ENCODE measurements at regions of chr10 and their contacts with region 1.

Region 1: DNA sequence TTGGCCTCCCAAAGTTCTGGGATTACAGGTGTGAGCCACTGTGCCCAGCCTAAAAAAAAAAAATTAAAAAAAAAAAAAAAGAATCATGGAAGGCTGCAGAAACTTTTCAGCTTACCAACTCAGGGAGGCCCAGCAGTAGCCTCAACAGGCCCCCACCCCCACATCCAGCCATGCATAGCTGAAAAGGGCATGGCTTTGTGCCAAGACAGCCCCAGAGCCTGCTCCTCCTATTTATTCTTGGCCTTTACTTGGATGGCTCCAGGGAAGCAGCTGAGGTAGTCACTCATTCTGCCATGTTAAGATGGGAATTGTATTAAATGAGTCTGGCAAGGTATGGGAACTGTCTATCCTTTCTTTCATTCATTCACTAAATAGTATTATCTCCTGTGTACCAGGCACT is 13.7 kb upstream of the CNNM2 start:
- DNase-seq: no peak
- ATAC-seq: no peak

Region 2: DNA sequence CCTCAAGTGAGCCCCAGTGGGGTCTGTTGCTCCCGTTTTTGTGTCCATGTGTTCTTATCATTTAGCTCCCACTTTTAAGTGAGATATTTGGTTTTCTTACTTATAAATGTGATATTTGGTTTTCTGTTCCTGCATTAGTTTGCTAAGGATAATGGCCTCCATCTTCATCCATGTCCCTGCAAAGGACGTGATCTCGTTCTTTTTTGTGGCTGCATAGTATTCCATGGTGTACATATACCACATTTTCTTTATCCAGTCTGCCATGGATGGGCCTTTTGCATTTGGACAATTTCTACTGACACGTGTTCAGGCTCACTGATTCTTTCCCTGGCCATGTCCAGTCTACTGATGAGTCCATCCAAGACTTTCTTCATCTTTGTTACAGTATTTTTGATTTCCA is 180.4 kb before region 1 on chr10:
- intact Hi-C with region 1: loop called (anchors 2 kb)
- DNase-seq: no peak
- ATAC-seq: no peak

Region 3: GRCh38 chr10:102835007-102835482 is 69.3 kb before region 1 on chr10:
- intact Hi-C with region 1: loop called (anchors 10 kb)
- DNase-seq: peak; percentile 88
- ATAC-seq: peak; percentile 94

Measured in sciatic nerve (tissue), 2 donors.